T-cell (primary cell): ENCODE measurements at regions of chr1 and their contacts with region 1.

Region 1: GRCh38 chr1:171674431-171675405 is 22.2 kb upstream of the MYOC start:
- DNase-seq: no peak
- ATAC-seq: no peak
- H3K4me3 ChIP-seq: no peak overlapping the region
- H3K4me3 Mint-ChIP-seq: no peak overlapping the region
- H3K27ac ChIP-seq: no peak overlapping the region
- H3K27ac Mint-ChIP-seq: no peak overlapping the region
- H3K4me1 ChIP-seq: no peaks in the 10 kb centered on the region
- H3K4me1 Mint-ChIP-seq: no peaks in the 10 kb centered on the region
- H3K27me3 ChIP-seq: peaks cover 0 to 5% of the 10 kb centered on the region in 2 experiments
- H3K27me3 Mint-ChIP-seq: peaks cover 8 to 11% of the 10 kb centered on the region in 2 donors

Region 2: DNA sequence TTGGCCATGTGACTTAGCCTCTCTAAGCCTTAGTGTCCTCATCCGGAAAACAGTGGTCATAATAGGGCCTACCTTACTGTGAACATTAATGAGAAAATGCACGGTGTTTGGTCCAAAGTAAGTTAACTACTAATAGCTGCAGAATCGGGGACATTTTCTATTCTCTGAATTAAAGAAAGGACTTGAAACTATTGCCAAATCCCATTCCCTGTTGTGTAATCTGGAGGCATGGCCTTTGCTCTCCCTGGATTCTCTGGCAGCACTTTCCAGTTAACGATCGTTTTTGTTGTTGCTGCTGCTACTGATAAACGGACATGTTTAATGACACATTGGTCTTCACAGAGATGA is 330.3 kb before region 1 on chr1:
- CTCF ChIA-PET with region 1: no interaction called
- POLR2A ChIA-PET with region 1: no interaction called
- DNase-seq: no peak
- ATAC-seq: no peak
- H3K4me3 ChIP-seq: no peak overlapping the region
- H3K4me3 Mint-ChIP-seq: no peak overlapping the region
- H3K27ac ChIP-seq: no peak overlapping the region
- H3K27ac Mint-ChIP-seq: no peak overlapping the region
- H3K4me1 ChIP-seq: no peaks in the 10 kb centered on the region
- H3K4me1 Mint-ChIP-seq: no peaks in the 10 kb centered on the region
- H3K27me3 ChIP-seq: no peaks in the 10 kb centered on the region
- H3K27me3 Mint-ChIP-seq: peaks cover 0 to under 1% of the 10 kb centered on the region in 2 donors

Region 3: DNA sequence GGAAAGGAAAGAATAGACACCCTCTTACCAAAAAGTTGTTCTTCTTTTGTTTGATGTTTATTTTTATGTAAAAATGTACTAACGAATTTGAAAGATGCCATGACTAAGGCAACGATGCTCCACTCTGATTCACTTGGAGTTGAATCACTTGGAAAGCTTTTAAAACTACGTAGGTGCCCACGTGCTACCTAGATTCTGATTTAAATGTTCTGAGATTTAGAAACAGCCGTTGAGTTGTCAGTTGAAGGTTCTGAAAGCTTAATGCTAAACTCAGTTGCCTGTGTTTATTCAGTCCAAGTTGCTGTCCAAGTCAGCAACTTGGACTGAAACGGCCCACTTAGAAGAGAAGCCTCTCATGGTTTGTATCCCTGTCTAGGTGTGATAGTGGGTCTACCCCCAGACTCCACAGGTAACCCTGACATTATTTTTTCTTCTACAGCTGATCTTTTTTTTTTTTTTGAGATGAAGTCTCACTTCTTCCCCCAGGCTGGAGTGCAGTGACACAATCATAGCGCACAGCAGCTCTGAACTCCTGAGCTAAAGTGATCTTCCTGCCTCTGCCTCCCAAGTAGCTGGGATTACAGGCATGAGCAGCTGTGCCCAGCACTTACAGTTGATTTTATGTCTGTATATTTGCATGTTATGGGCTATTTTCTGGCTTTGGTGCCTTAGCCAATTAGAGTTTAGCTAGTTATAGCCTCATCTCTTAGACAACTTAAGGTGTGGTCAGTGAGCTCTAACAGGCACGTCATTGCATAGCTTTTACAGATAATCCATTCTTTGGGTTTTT is 68.6 kb after region 1 on chr1:
- CTCF ChIA-PET with region 1: no interaction called
- POLR2A ChIA-PET with region 1: no interaction called
- DNase-seq: peak in 2 of 35 experiments; percentile 1 to 31
- ATAC-seq: no peak
- H3K4me3 ChIP-seq: peak overlapping the region; percentile 80 to 95
- H3K4me3 Mint-ChIP-seq: peak overlapping the region; percentile 95 to 100 (median 99)
- H3K27ac ChIP-seq: peak overlapping the region; percentile 99
- H3K27ac Mint-ChIP-seq: peak overlapping the region; percentile 100
- H3K4me1 ChIP-seq: peaks cover 15 to 21% of the 10 kb centered on the region in 2 experiments
- H3K4me1 Mint-ChIP-seq: peaks cover 53 to 58% (median 53%) of the 10 kb centered on the region in 3 donors
- H3K27me3 ChIP-seq: no peaks in the 10 kb centered on the region
- H3K27me3 Mint-ChIP-seq: no peaks in the 10 kb centered on the region

Region 4: GRCh38 chr1:171995573-171995972 is 320.9 kb after region 1 on chr1:
- CTCF ChIA-PET with region 1: interaction called in 1 of 2 experiments, 13 read pairs
- POLR2A ChIA-PET with region 1: no interaction called
- DNase-seq: no peak
- ATAC-seq: no peak
- H3K4me3 ChIP-seq: no peak overlapping the region
- H3K4me3 Mint-ChIP-seq: no peak overlapping the region
- H3K27ac ChIP-seq: no peak overlapping the region
- H3K27ac Mint-ChIP-seq: no peak overlapping the region
- H3K4me1 ChIP-seq: no peaks in the 10 kb centered on the region
- H3K4me1 Mint-ChIP-seq: no peaks in the 10 kb centered on the region
- H3K27me3 ChIP-seq: no peaks in the 10 kb centered on the region
- H3K27me3 Mint-ChIP-seq: no peaks in the 10 kb centered on the region